ENCODE measurements at regions of chr5 and their contacts with region 1.

Region 1: DNA sequence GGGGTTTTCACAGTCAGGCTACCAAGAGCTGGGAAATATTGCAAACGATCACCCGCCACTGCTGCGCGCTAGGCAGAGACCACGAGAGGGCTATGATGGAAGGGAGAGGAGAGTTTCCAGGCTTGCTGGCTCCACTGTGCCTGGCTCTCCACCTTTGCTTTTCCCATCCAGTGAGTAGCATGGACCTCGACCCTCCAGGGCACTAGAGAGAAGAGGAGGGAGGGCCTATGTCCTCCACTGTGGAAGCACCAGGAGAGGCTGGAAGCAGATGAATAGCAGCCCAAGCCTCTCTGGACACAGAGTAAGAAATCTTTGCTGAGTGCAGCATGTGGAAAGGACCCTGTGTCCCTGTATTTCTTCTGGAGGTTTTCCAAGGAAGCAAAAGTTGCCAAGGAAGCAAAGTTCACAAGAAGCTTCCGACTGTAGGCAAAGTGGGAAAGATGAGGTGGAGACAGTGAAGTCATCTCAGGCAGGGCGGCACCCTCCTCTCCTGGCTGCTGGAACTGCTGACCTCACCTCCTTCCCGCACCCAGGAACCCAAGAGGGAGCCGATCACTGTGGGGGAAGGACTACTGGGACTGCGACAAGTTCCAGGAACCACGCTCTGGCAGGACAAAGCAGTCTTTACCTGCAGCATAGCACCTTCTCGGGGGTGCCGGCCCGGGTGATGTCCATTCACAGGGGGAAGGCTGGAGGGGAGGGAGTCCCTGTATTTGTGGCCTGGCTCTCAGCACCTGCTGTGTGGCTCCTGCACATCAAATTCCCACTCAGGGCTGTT is 79.6 kb downstream of the CSNK1A1 start:
- DNase-seq: peak; percentile 65
- ATAC-seq: peak; percentile 81
- H3K4me3 ChIP-seq: no peak overlapping the region
- H3K27ac ChIP-seq: peak overlapping the region; percentile 34
- H3K4me1 ChIP-seq: peaks cover 24% of the 10 kb centered on the region
- H3K27me3 ChIP-seq: no peaks in the 10 kb centered on the region
- CTCF ChIP-seq: no peak

Region 2: DNA sequence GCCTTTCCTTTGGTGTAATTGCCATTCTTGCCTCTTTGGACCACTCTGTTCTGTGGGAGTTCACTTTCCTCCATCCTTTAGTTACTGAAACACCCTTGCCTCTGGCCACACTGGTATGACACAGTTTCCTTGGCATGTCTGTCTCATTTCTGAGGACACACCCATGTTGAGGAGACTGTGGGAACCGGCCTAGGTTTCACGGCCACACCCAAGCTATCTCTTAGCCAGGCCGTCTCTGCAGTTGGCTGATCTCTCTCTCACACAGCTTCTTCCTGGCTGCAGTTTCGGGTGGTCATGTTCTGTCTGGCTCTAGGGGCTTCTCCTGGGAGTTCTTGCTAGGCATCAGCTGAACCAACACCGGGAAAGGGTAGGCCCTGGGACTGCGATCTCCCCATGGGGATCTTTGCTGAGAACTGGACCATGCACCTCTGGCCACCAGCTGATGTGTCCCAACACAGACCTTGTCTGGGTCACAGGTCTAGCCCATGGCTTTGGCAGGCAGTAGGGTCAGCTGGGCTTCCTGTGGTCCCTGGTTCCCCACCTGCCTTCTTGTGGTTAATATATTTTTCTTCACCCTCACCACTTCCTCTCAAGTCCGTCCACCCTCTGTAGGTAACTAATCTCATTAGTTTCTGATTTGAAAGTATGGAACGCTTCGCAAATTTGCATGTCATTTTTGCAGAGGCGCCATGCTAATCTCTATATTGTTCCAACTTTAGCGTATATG is 134.6 kb after region 1 on chr5:
- CTCF ChIA-PET with region 1: no interaction called
- POLR2A ChIA-PET with region 1: no interaction called
- intact Hi-C with region 1: loop called (anchors 1 kb)
- DNase-seq: peak; percentile 100
- ATAC-seq: peak; percentile 97
- H3K4me3 ChIP-seq: no peak overlapping the region
- H3K27ac ChIP-seq: peak overlapping the region; percentile 93
- H3K4me1 ChIP-seq: peaks cover 42% of the 10 kb centered on the region
- H3K27me3 ChIP-seq: no peaks in the 10 kb centered on the region
- CTCF ChIP-seq: no peak